HCT116 (cell line): ENCODE measurements at regions of chr5 and their contacts with region 1.

Region 1: GRCh38 chr5:79120216-79120615 is 8.6 kb downstream of the BHMT start:
- DNase-seq: no peak
- ATAC-seq: no peak
- H3K4me3 ChIP-seq: no peak overlapping the region
- H3K27ac ChIP-seq: no peak overlapping the region
- H3K4me1 ChIP-seq: no peaks in the 10 kb centered on the region
- H3K27me3 ChIP-seq: no peaks in the 10 kb centered on the region
- CTCF ChIP-seq: no peak
- POLR2A ChIP-seq: no peak
- RAD21 ChIP-seq: no peak

Region 2: DNA sequence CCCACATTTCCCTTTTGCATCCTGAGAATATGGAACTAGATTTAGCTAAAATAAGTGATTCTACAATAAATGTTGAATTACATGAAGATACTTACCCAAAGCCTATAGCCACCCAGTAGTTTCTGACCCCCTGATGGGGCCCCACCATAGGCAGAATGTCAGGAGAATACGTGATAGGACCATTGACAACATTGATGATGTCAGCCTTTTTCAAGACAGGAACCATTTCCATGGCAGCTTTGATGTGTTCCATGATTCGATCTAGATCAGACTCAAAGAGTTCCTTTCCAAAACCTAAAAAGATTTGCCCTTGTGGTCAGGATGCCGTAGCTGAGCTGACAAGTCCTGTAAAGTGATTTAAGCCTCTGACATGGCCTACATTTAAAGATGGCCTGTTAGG is 78.0 kb before region 1 on chr5:
- CTCF ChIA-PET with region 1: no interaction called
- POLR2A ChIA-PET with region 1: no interaction called
- RAD21 ChIA-PET with region 1: no interaction called
- intact Hi-C with region 1: loop called (anchors 5 kb)
- DNase-seq: no peak
- ATAC-seq: no peak
- H3K4me3 ChIP-seq: no peak overlapping the region
- H3K27ac ChIP-seq: no peak overlapping the region
- H3K4me1 ChIP-seq: no peaks in the 10 kb centered on the region
- H3K27me3 ChIP-seq: no peaks in the 10 kb centered on the region
- CTCF ChIP-seq: no peak
- POLR2A ChIP-seq: no peak
- RAD21 ChIP-seq: no peak